CD8-positive, alpha-beta T cell (primary cell): ENCODE measurements at regions of chr17 and their contacts with region 1.

Region 1: DNA sequence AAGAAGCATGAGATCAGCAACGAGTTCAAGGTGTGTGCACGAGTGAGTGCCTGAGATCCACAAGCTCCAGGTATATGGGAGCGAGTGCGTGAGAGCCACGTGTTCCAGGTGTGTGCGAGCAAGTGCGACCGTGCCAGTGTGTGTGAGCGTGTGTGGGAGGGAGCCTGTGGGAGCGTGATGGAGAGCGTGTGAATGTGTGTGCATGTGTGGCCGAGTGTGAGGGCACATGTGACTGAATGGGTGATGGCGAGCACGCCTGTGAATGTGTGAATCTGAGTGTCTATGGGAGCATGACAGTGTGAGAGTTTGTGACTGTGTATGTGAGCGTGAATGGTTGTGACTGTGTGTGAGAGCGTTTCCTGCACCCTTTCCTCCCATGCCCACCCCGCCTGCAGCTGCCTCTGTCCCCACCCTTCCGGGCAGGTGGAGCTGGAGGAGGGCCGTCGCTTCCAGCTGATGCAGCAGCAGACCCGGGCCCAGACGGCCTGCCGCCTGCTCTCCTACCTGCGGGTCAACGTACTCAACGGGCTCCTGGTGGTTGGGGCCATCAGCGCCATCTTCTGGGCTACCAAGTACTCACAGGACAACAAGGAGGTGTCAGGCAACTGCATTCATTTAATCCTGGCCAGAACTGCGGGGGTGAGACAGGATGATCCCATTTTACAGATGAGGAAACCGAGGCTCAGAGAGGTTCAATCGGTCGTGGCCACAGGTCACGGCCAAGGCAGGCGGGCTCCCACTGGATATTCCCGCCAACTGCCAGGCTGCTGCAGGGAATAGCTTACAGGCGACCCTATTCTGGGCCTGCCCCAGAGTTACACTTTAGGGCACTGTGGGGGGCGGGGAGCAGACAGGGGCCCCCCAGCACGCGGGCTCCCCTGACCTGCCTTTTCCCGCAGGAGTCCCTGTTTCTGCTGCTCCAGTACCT is 3.7 kb downstream of the TMC8 start:
- DNase-seq: peak; percentile 65 to 92 (median 80)
- ATAC-seq: peak; percentile 29
- H3K4me3 ChIP-seq: peak overlapping the region; percentile 95 to 97
- H3K4me3 Mint-ChIP-seq: peak overlapping the region; percentile 79
- H3K27ac ChIP-seq: peak overlapping the region; percentile 37 to 69
- H3K27ac Mint-ChIP-seq: peak overlapping the region; percentile 88
- H3K4me1 ChIP-seq: peaks cover 74% of the 10 kb centered on the region
- H3K4me1 Mint-ChIP-seq: peaks cover 72% of the 10 kb centered on the region
- H3K27me3 ChIP-seq: no peaks in the 10 kb centered on the region
- H3K27me3 Mint-ChIP-seq: no peaks in the 10 kb centered on the region
- CTCF ChIP-seq: peak; percentile 72

Region 2: GRCh38 chr17:77444984-77445759 is 689.1 kb before region 1 on chr17:
- CTCF ChIA-PET with region 1: no interaction called
- POLR2A ChIA-PET with region 1: interaction called, 3 read pairs
- intact Hi-C with region 1: loop called in 1 of 2 experiments (anchors 5 kb)
- DNase-seq: peak; percentile 75 to 99 (median 85)
- ATAC-seq: peak; percentile 62
- H3K4me3 ChIP-seq: peak overlapping the region; percentile 32 to 38
- H3K4me3 Mint-ChIP-seq: peak overlapping the region; percentile 82
- H3K27ac ChIP-seq: peak overlapping the region; percentile 64 to 72
- H3K27ac Mint-ChIP-seq: peak overlapping the region; percentile 97
- H3K4me1 ChIP-seq: peaks cover 92% of the 10 kb centered on the region
- H3K4me1 Mint-ChIP-seq: peaks cover 90% of the 10 kb centered on the region
- H3K27me3 ChIP-seq: no peaks in the 10 kb centered on the region
- H3K27me3 Mint-ChIP-seq: no peaks in the 10 kb centered on the region
- CTCF ChIP-seq: no peak

Region 3: DNA sequence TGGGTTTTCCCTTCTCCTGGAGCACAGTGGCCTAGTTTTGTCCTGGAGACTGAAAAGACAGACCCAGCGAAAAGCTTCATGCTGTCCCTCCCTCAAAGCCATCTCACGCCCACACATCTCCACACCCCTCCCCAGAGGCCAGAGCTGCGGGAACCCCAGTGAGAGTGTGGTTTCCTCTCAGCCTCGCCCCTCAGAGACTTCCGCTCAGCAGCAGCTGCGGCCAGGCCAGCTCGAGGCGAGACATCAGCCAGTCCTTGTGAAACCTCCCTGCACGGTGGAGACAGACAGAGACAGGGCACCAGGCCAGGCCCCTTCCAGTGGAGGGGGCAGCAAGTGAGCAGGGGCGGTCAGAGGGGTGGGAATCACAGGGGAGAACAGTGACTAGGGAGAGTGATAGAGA is 252.7 kb before region 1 on chr17:
- CTCF ChIA-PET with region 1: no interaction called
- POLR2A ChIA-PET with region 1: no interaction called
- intact Hi-C with region 1: loop called (anchors 10 kb)
- DNase-seq: peak; percentile 57 to 93 (median 76)
- ATAC-seq: peak; percentile 13
- H3K4me3 ChIP-seq: peak overlapping the region; percentile 44
- H3K4me3 Mint-ChIP-seq: peak overlapping the region; percentile 79
- H3K27ac ChIP-seq: peak overlapping the region; percentile 80 to 98
- H3K27ac Mint-ChIP-seq: peak overlapping the region; percentile 98
- H3K4me1 ChIP-seq: peaks cover 83% of the 10 kb centered on the region
- H3K4me1 Mint-ChIP-seq: peaks cover 92% of the 10 kb centered on the region
- H3K27me3 ChIP-seq: no peaks in the 10 kb centered on the region
- H3K27me3 Mint-ChIP-seq: no peaks in the 10 kb centered on the region
- CTCF ChIP-seq: no peak

Region 4: DNA sequence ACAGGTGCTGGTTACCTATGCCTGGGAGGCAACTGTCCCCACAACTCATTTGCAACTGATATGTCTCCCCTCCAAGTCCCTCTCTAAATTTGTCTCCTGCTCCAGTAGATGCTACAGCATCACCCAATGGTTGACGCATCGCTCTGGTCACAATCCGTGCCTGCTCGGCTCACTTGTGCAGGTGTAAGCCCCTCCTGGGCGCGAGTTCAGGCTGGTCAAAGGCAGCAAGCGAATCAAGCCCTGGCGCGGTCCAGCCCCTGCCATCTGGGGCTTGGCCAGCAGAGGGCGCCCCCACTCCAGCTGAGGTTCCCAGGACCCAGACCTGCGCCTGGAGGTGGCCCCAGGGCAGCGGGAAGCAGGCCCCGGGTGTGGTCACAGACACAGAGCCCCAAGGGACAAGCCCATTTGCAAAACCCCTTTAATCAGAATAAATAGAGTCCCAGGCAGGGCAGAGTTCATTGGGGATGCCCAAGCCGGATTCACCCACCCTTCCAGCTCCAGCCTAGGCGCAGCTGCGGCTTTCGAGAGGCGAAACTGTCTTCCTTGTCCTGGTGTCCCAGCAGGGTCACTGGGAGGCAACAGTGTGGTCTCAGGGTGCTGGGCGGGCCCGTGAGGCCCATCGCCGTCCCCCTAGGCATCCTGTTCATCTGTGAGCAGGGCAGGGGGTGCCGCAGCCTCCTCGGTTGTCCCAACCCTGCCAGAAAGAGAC is 21.6 kb before region 1 on chr17:
- CTCF ChIA-PET with region 1: interaction called, 200 read pairs
- POLR2A ChIA-PET with region 1: interaction called, 583 read pairs
- intact Hi-C with region 1: loop called (anchors 1 kb)
- DNase-seq: peak; percentile 62 to 91 (median 78)
- ATAC-seq: peak; percentile 67
- H3K4me3 ChIP-seq: no peak overlapping the region
- H3K4me3 Mint-ChIP-seq: peak overlapping the region; percentile 42
- H3K27ac ChIP-seq: peak overlapping the region in 1 of 2 experiments; percentile 74
- H3K27ac Mint-ChIP-seq: peak overlapping the region; percentile 90
- H3K4me1 ChIP-seq: peaks cover 45% of the 10 kb centered on the region
- H3K4me1 Mint-ChIP-seq: peaks cover 42% of the 10 kb centered on the region
- H3K27me3 ChIP-seq: no peaks in the 10 kb centered on the region
- H3K27me3 Mint-ChIP-seq: no peaks in the 10 kb centered on the region
- CTCF ChIP-seq: peak; percentile 99

Region 5: GRCh38 chr17:78168242-78168902 is 34.1 kb after region 1 on chr17 and contains the start of gene SYNGR2:
- CTCF ChIA-PET with region 1: interaction called, 7 read pairs
- POLR2A ChIA-PET with region 1: interaction called, 3 read pairs
- intact Hi-C with region 1: loop called in 1 of 2 experiments (anchors 5 kb)
- DNase-seq: peak; percentile 74 to 93 (median 86)
- ATAC-seq: peak; percentile 89
- H3K4me3 ChIP-seq: peak within 1 kb of the TSS; percentile 52 to 59
- H3K4me3 Mint-ChIP-seq: peak within 1 kb of the TSS; percentile 69
- H3K27ac ChIP-seq: peak within 1 kb of the TSS; percentile 52 to 73
- H3K27ac Mint-ChIP-seq: peak within 1 kb of the TSS; percentile 79
- H3K4me1 ChIP-seq: peaks cover 30% of the 10 kb centered on the region
- H3K4me1 Mint-ChIP-seq: peaks cover 36% of the 10 kb centered on the region
- H3K27me3 ChIP-seq: no peaks in the 10 kb centered on the region
- H3K27me3 Mint-ChIP-seq: no peaks in the 10 kb centered on the region
- CTCF ChIP-seq: no peak
- total RNA-seq, gene SYNGR2: 36.4 to 36.7 TPM

Region 6: DNA sequence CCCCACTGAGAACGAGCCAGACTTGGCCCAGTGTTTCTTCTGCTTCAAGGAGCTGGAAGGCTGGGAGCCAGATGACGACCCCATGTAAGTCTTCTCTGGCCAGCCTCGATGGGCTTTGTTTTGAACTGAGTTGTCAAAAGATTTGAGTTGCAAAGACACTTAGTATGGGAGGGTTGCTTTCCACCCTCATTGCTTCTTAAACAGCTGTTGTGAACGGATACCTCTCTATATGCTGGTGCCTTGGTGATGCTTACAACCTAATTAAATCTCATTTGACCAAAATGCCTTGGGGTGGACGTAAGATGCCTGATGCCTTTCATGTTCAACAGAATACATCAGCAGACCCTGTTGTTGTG is 80.4 kb after region 1 on chr17:
- CTCF ChIA-PET with region 1: no interaction called
- POLR2A ChIA-PET with region 1: no interaction called
- intact Hi-C with region 1: no loop called
- DNase-seq: no peak
- ATAC-seq: no peak
- H3K4me3 ChIP-seq: peak overlapping the region; percentile 48 to 52
- H3K4me3 Mint-ChIP-seq: peak overlapping the region; percentile 70
- H3K27ac ChIP-seq: no peak overlapping the region
- H3K27ac Mint-ChIP-seq: no peak overlapping the region
- H3K4me1 ChIP-seq: peaks cover 7% of the 10 kb centered on the region
- H3K4me1 Mint-ChIP-seq: peaks cover 6% of the 10 kb centered on the region
- H3K27me3 ChIP-seq: no peaks in the 10 kb centered on the region
- H3K27me3 Mint-ChIP-seq: no peaks in the 10 kb centered on the region
- CTCF ChIP-seq: no peak

Region 7: DNA sequence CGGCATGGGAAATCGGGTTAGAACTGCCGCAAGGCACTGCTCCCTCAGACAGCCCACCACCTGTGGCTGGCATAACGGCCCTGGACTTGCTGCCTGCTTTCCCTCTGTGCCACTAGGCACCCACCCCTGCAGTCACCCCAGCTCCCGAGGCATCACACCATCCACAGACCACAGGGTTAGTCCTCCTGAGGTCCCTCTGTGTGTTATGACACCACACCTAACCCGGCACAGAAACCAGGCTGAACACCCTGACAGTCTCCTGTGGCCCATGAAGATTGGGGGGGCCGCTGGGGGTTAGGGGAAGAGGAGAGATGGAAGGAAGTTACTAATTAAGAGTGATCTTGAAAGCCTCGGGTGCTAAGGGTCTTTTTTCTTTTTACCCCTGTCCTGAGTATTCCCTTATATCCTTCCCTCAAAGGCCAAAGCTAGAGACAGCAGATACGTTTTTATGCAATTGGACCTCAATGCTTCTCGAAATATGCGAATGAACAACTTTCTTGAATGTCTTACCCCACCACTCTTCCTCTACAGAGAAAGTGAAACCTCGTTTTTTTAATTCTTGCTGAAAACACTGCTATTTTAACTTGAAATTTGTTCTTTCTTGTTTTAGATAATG is 640.8 kb after region 1 on chr17:
- CTCF ChIA-PET with region 1: no interaction called
- POLR2A ChIA-PET with region 1: no interaction called
- intact Hi-C with region 1: loop called in 1 of 2 experiments (anchors 10 kb)
- DNase-seq: peak; percentile 35 to 85 (median 67)
- ATAC-seq: peak; percentile 41
- H3K4me3 ChIP-seq: peak overlapping the region; percentile 46 to 62
- H3K4me3 Mint-ChIP-seq: peak overlapping the region; percentile 88
- H3K27ac ChIP-seq: peak overlapping the region; percentile 55 to 82
- H3K27ac Mint-ChIP-seq: peak overlapping the region; percentile 96
- H3K4me1 ChIP-seq: peaks cover 81% of the 10 kb centered on the region
- H3K4me1 Mint-ChIP-seq: peaks cover 67% of the 10 kb centered on the region
- H3K27me3 ChIP-seq: no peaks in the 10 kb centered on the region
- H3K27me3 Mint-ChIP-seq: no peaks in the 10 kb centered on the region
- CTCF ChIP-seq: no peak